ENCODE measurements at regions of chr9 and their contacts with region 1.

Region 1: DNA sequence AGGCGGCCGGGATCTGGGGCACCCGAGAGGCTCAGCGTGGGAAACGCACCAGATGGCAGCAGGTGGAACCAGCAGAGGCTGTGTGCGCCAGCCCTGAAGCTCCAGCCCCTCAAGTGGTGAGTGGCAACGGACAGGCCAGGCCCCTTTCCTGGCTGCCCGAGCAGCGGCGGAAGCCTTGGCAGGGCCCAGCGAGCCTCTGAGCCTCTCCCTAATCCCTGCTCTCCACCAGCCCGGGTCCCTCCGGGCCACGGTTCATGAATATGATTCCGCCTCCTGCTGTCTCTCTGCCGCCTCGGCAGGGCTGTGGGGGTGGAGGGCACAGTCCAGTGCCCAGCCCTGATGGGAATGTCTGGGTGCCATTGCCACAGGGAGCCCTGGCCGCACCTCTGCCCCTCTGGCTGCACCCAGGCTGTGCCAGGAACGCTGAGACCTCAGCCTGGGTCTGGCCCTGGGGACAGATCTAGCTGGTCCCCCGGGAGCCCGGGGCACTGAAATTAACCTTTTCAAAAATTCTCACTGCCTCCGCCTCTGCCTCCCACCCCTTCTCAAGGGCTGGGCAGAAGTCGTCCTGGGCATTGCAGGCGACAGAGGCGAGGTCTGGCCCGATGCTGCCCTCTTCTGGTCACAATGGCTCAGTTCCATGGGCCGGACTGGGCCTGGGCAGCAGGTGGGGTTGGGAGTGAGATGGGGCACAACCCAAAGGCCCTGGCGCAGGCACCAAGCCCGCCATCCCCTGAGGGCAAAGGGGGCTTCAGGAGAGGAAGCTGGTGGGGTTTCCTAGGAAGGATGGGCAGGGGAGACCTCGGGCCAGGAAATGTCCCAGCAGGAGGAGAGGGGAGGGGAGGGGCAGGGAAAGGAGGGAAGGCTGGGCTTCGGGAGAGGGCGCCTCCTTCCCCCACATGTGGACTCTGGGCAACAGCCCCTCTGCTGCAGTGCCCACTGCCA is 20.3 kb downstream of the CCDC187 start:
- DNase-seq: peak; percentile 80
- H3K4me3 ChIP-seq: no peak overlapping the region
- H3K27ac ChIP-seq: no peak overlapping the region
- H3K4me1 ChIP-seq: peaks cover 5% of the 10 kb centered on the region
- H3K27me3 ChIP-seq: no peaks in the 10 kb centered on the region
- CTCF ChIP-seq: peak; percentile 92

Region 2: GRCh38 chr9:135602789-135603481 is 680.6 kb before region 1 on chr9:
- CTCF ChIA-PET with region 1: no interaction called
- POLR2A ChIA-PET with region 1: no interaction called
- intact Hi-C with region 1: loop called (anchors 5 kb)
- DNase-seq: peak; percentile 59
- H3K4me3 ChIP-seq: no peak overlapping the region
- H3K27ac ChIP-seq: no peak overlapping the region
- H3K4me1 ChIP-seq: no peaks in the 10 kb centered on the region
- H3K27me3 ChIP-seq: no peaks in the 10 kb centered on the region
- CTCF ChIP-seq: peak; percentile 79

Region 3: DNA sequence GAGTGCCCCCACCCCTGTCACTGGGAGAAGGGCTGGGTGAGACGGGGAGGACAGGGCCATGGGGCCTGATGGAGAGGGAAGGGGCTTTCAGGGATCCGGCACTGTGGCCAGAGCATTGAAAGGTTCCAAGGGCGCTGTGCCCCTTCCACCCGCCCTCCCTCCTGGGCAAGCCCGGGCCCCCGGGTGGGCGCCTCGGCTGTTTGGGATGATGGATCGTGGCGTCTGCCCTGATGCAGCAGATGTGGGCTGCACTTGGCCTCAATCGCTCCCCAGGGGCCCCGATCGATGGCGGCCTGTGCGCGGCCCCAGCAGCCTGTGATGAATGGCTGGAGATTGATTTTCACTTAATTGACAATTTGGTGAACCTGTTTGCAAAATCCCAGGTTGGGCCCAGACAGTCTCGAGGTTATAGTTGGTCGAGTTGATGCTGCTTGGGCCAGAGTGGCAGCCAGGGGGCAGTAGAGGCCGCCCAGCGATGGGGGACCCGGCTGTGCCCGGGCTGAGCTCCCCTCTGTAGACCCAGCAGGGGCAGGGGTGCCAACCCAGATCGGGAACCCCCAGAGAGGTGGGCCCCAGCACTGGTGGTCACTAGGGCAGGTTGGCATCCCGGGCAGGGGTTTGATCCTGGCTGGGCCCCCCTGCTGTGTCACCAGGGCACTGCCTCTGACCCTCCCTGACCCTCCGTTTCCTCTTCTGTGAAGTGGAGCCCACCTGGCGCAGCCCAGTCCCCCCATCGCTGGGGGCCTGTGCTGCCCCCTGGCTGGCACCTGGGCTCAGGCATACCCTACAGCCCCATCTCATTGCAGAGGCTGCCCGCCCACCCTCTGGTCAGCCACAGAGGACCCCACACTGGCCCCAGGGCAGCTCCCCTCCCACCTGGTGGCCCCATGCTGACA is 113.3 kb before region 1 on chr9:
- CTCF ChIA-PET with region 1: interaction called, 3 read pairs
- POLR2A ChIA-PET with region 1: no interaction called
- intact Hi-C with region 1: loop called (anchors 1 kb)
- DNase-seq: peak; percentile 55
- H3K4me3 ChIP-seq: no peak overlapping the region
- H3K27ac ChIP-seq: no peak overlapping the region
- H3K4me1 ChIP-seq: no peaks in the 10 kb centered on the region
- H3K27me3 ChIP-seq: no peaks in the 10 kb centered on the region
- CTCF ChIP-seq: peak; percentile 88

Measured in A673 (cell line).